Esophagus squamous epithelium (tissue), 5 donors: ENCODE measurements at regions of chr12 and their contacts with region 1.

Region 1: GRCh38 chr12:11202811-11203210 is 16.1 kb upstream of the TAS2R42 start:
- DNase-seq: no peak
- H3K4me3 ChIP-seq: no peak overlapping the region
- H3K27ac ChIP-seq: no peak overlapping the region
- H3K4me1 ChIP-seq: no peaks in the 10 kb centered on the region
- H3K27me3 ChIP-seq: no peaks in the 10 kb centered on the region
- CTCF ChIP-seq: no peak
- POLR2A ChIP-seq: no peak

Region 2: DNA sequence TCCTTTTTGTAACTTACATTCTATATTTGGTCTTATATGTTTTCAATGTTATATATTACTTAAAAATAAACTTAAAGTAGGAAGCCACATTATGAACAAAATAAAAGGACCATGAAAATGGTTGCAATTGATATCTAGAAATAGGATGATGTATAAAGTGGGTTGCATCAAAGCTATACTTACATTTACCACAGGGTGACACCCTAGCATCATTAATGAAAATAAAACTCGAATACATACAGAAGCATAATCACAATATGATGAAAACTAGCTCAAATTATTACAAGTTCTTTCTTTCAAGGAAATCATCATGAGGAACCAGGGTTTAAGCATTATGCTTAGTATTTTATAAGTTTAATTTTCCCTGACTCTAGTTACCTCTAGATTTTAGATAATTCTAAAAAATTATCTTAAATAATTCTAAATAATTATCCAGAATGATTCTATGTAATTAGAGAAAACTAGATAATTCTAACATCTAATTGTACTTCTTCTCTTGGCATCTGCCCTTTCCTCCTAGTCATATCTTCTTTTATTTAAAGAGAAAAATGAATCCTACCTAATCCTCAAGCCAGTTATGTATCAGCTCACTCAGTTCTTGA is 431.6 kb before region 1 on chr12:
- intact Hi-C with region 1: loop called (anchors 10 kb)
- DNase-seq: no peak
- H3K4me3 ChIP-seq: no peak overlapping the region
- H3K27ac ChIP-seq: no peak overlapping the region
- H3K4me1 ChIP-seq: no peaks in the 10 kb centered on the region
- H3K27me3 ChIP-seq: peaks cover 0 to 46% (median 0%) of the 10 kb centered on the region in 4 donors
- CTCF ChIP-seq: peak; percentile 15 to 87 (median 62)
- POLR2A ChIP-seq: no peak